Ascending aorta (tissue), 2 donors: ENCODE measurements at regions of chr14 and their contacts with region 1.

Region 1: GRCh38 chr14:30270200-30271161 is 288.5 kb upstream of the G2E3 start:
- DNase-seq: peak; percentile 17 to 88
- H3K4me3 ChIP-seq: peak overlapping the region; percentile 35 to 58
- H3K27ac ChIP-seq: no peak overlapping the region
- H3K4me1 ChIP-seq: peaks cover 0 to 2% of the 10 kb centered on the region in 2 donors
- H3K27me3 ChIP-seq: no peaks in the 10 kb centered on the region
- CTCF ChIP-seq: peak; percentile 45 to 89 (median 85)

Region 2: GRCh38 chr14:29971101-29971500 is 299.4 kb before region 1 on chr14:
- intact Hi-C with region 1: no loop called
- DNase-seq: no peak
- H3K4me3 ChIP-seq: no peak overlapping the region
- H3K27ac ChIP-seq: no peak overlapping the region
- H3K4me1 ChIP-seq: no peaks in the 10 kb centered on the region
- H3K27me3 ChIP-seq: no peaks in the 10 kb centered on the region
- CTCF ChIP-seq: no peak

Region 3: GRCh38 chr14:30223385-30223813 is 47.1 kb before region 1 on chr14:
- intact Hi-C with region 1: loop called (anchors 2 kb)
- DNase-seq: peak; percentile 15 to 87
- H3K4me3 ChIP-seq: no peak overlapping the region
- H3K27ac ChIP-seq: peak overlapping the region; percentile 82 to 87
- H3K4me1 ChIP-seq: peaks cover 8 to 48% of the 10 kb centered on the region in 2 donors
- H3K27me3 ChIP-seq: no peaks in the 10 kb centered on the region
- CTCF ChIP-seq: no peak